ENCODE measurements at regions of chr16 and their contacts with region 1.

Region 1: GRCh38 chr16:79175286-79176057 is 425.1 kb downstream of the MAF start:
- DNase-seq: no peak
- H3K4me3 ChIP-seq: no peak overlapping the region
- H3K27ac ChIP-seq: no peak overlapping the region
- H3K4me1 ChIP-seq: no peaks in the 10 kb centered on the region
- H3K27me3 ChIP-seq: no peaks in the 10 kb centered on the region
- CTCF ChIP-seq: no peak
- EP300 ChIP-seq: no peak
- POLR2A ChIP-seq: no peak

Region 2: DNA sequence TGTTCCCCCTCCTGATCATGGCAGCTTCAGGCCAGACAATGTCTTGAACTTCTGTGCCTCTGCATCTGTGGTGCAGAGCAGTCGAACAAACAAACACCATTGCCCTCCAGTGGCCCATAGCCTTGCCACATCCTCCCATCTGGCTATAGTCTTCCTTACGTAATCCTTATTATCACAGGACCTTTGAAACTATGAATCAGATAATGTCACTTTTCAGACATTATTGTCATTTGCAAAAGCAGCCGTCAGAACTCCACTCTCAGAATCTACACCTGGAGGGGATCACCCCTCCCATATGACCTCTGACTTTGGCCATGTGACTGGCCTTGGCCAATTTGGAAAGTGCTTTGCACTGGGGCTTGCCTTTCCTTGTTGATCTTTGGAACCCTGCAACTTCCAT is 37.7 kb after region 1 on chr16:
- intact Hi-C with region 1: loop called in 1 of 4 experiments (anchors 2 kb)
- DNase-seq: peak in 1 of 5 donors; percentile 23
- H3K4me3 ChIP-seq: no peak overlapping the region
- H3K27ac ChIP-seq: no peak overlapping the region
- H3K4me1 ChIP-seq: peaks cover 9% of the 10 kb centered on the region
- H3K27me3 ChIP-seq: no peaks in the 10 kb centered on the region
- CTCF ChIP-seq: no peak
- EP300 ChIP-seq: no peak
- POLR2A ChIP-seq: no peak

Region 3: GRCh38 chr16:79253100-79253631 is 77.7 kb after region 1 on chr16:
- intact Hi-C with region 1: no loop called
- DNase-seq: peak; percentile 76 to 90 (median 85)
- H3K4me3 ChIP-seq: no peak overlapping the region
- H3K27ac ChIP-seq: peak overlapping the region in 1 of 2 donors; percentile 47
- H3K4me1 ChIP-seq: peaks cover 3% of the 10 kb centered on the region
- H3K27me3 ChIP-seq: no peaks in the 10 kb centered on the region
- CTCF ChIP-seq: no peak
- EP300 ChIP-seq: no peak
- POLR2A ChIP-seq: no peak

Region 4: GRCh38 chr16:79482011-79482410 is 306.5 kb after region 1 on chr16:
- intact Hi-C with region 1: no loop called
- DNase-seq: no peak
- H3K4me3 ChIP-seq: no peak overlapping the region
- H3K27ac ChIP-seq: no peak overlapping the region
- H3K4me1 ChIP-seq: no peaks in the 10 kb centered on the region
- H3K27me3 ChIP-seq: no peaks in the 10 kb centered on the region
- CTCF ChIP-seq: no peak
- EP300 ChIP-seq: no peak
- POLR2A ChIP-seq: no peak